A673 (cell line): ENCODE measurements at regions of chr16 and their contacts with region 1.

Region 1: GRCh38 chr16:74309789-74310781 is 13.5 kb downstream of the PSMD7 start:
- DNase-seq: peak; percentile 73
- H3K4me3 ChIP-seq: no peak overlapping the region
- H3K27ac ChIP-seq: no peak overlapping the region
- H3K4me1 ChIP-seq: no peaks in the 10 kb centered on the region
- H3K27me3 ChIP-seq: no peaks in the 10 kb centered on the region
- CTCF ChIP-seq: peak; percentile 76

Region 2: DNA sequence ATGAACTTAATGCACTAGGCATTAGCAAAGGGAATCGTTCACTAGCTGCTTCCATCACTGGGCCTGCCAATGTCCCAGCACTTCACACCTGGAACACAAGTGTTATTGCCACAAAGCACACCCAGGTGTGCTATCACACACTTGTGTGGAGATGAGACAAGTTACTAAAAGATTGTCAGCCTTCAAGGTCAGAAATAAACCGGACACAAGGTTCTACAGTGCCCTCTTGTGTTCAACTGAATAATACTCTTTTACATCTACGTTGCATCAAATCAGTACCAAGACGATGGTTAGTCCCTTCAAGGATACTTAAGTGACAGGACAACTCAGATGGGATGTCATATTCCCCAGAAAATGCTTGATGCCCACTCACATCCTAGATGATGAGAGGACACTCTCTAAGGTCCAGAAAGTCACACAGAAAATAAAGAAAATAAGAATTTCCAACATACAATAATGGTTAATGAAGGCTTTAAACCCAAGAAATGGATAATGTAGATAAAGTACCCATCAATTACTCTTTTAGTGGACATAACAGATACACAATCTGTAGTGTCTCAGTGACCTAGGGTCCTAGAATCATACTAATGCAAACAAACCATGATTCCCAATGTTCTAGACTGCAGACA is 313.2 kb after region 1 on chr16:
- CTCF ChIA-PET with region 1: no interaction called
- POLR2A ChIA-PET with region 1: no interaction called
- intact Hi-C with region 1: loop called (anchors 2 kb)
- DNase-seq: peak; percentile 82
- H3K4me3 ChIP-seq: no peak overlapping the region
- H3K27ac ChIP-seq: peak overlapping the region; percentile 73
- H3K4me1 ChIP-seq: peaks cover 20% of the 10 kb centered on the region
- H3K27me3 ChIP-seq: no peaks in the 10 kb centered on the region
- CTCF ChIP-seq: peak; percentile 76

Region 3: GRCh38 chr16:74650966-74651567 is 341.0 kb after region 1 on chr16:
- CTCF ChIA-PET with region 1: interaction called, 6 read pairs
- POLR2A ChIA-PET with region 1: no interaction called
- intact Hi-C with region 1: loop called (anchors 10 kb)
- DNase-seq: peak; percentile 40
- H3K4me3 ChIP-seq: no peak overlapping the region
- H3K27ac ChIP-seq: peak overlapping the region; percentile 64
- H3K4me1 ChIP-seq: peaks cover 35% of the 10 kb centered on the region
- H3K27me3 ChIP-seq: no peaks in the 10 kb centered on the region
- CTCF ChIP-seq: peak; percentile 76